Endothelial cell of umbilical vein (primary cell): ENCODE measurements at regions of chr9 and their contacts with region 1.

Region 1: GRCh38 chr9:81182431-81182830 is 506.9 kb downstream of the TLE1 start:
- DNase-seq: no peak
- H3K4me3 ChIP-seq: no peak overlapping the region
- H3K27ac ChIP-seq: no peak overlapping the region
- H3K4me1 ChIP-seq: no peaks in the 10 kb centered on the region
- H3K27me3 ChIP-seq: no peaks in the 10 kb centered on the region
- CTCF ChIP-seq: no peak
- POLR2A ChIP-seq: no peak

Region 2: GRCh38 chr9:81193362-81194304 is 11.2 kb after region 1 on chr9:
- CTCF ChIA-PET with region 1: no interaction called
- POLR2A ChIA-PET with region 1: no interaction called
- dilution Hi-C with region 1: no loop called
- intact Hi-C with region 1: loop called (anchors 2 kb)
- DNase-seq: no peak
- H3K4me3 ChIP-seq: no peak overlapping the region
- H3K27ac ChIP-seq: no peak overlapping the region
- H3K4me1 ChIP-seq: no peaks in the 10 kb centered on the region
- H3K27me3 ChIP-seq: no peaks in the 10 kb centered on the region
- CTCF ChIP-seq: no peak
- POLR2A ChIP-seq: no peak